Right ventricle myocardium superior (tissue), 1 donor: ENCODE measurements at regions of chr13 and their contacts with region 1.

Region 1: GRCh38 chr13:41132512-41133152 is at the start of gene KBTBD6:
- DNase-seq: peak; percentile 97
- ATAC-seq: peak; percentile 98
- total RNA-seq, gene KBTBD6: 7.3 TPM

Region 2: GRCh38 chr13:41193919-41194824 is 61.5 kb after region 1 on chr13 and contains the start of gene KBTBD7:
- intact Hi-C with region 1: loop called (anchors 5 kb)
- DNase-seq: peak; percentile 96
- ATAC-seq: peak; percentile 99
- total RNA-seq, gene KBTBD7: 5.9 TPM

Region 3: GRCh38 chr13:41456768-41457588 is 324.3 kb after region 1 on chr13 and contains the start of gene RGCC:
- intact Hi-C with region 1: no loop called
- DNase-seq: peak; percentile 87
- ATAC-seq: peak; percentile 87
- total RNA-seq, gene RGCC: 33.2 TPM